Common myeloid progenitor, CD34-positive (primary cell): ENCODE measurements at regions of chr1 and their contacts with region 1.

Region 1: DNA sequence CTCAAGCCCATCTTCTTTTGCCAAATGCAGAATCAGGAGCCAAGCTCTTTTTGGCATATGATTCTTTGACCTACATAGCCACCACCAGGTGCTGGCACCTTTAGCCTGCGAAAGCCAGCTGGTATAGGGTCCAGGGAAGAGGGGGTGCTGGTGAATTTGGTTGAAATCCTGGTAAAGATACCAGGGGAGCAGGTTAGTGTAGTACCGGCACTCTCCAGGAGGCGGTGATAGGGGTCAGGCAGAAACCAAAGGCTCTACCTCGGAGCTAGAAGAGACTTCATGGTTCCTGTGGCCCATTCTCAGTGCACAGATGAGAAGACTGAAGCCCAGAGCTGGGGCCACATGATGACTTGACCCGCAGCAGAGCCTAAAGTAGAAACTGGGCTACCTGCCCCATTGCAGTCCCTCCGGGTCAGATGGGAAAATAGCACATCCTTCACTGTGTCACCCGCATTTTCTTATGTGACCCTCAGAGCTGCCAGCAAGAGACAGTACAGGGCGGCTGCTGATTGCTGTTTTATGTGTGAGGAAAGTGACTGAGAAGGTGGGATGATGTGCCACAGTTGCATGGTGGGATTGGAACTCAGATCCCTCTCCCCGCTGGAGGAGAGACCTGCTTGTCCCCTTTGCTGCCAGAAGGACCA is 36.0 kb upstream of the IL19 start:
- DNase-seq: peak; percentile 36 to 69 (median 65)
- H3K4me3 ChIP-seq: no peak overlapping the region
- H3K27ac ChIP-seq: no peak overlapping the region
- H3K4me1 ChIP-seq: peaks cover 0 to 38% (median 36%) of the 10 kb centered on the region in 4 experiments
- H3K27me3 ChIP-seq: no peaks in the 10 kb centered on the region

Region 2: GRCh38 chr1:206419250-206419649 is 315.4 kb before region 1 on chr1:
- CTCF ChIA-PET with region 1: no interaction called
- POLR2A ChIA-PET with region 1: no interaction called
- DNase-seq: no peak
- H3K4me3 ChIP-seq: no peak overlapping the region
- H3K27ac ChIP-seq: no peak overlapping the region
- H3K4me1 ChIP-seq: no peaks in the 10 kb centered on the region
- H3K27me3 ChIP-seq: no peaks in the 10 kb centered on the region

Region 3: DNA sequence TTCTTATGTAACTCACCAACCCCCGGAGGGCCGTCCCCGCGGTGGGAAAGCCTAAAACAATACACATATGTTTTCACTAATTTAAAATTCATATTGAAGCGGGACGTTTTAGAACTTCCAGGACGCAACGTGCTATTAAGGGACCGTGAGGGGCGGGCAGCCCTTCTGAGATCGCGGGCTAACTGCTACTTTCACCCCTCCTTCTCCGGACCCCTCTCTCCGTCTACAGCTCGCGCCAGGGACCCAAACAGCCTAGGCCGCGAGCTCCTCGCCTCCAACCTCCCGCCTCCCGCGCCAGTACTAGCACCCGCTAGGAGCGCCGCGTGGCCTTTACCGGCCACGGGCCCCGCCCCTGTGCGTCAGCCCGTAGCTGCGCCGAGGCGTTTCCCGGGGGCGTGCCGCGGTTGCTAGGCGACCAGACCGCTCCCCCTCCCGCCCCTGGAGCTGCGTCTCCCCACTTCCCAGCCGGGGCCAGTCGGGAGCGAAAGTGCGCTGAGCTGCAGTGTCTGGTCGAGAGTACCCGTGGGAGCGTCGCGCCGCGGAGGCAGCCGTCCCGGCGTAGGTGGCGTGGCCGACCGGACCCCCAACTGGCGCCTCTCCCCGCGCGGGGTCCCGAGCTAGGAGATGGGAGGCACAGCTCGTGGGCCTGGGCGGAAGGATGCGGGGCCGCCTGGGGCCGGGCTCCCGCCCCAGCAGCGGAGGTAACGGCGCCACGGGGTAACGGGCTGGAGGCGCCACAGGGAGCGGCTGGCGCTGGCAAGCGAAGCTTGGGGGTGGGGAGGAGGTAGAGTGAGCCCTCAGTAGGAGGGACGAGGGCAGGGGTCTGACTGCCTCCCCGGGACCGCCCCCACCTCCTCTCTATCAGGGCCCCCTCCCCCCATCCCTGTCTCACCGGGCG is 99.3 kb before region 1 on chr1 and contains the start of gene DYRK3:
- CTCF ChIA-PET with region 1: interaction called, 17 read pairs
- POLR2A ChIA-PET with region 1: no interaction called
- DNase-seq: peak; percentile 91 to 93 (median 92)
- H3K4me3 ChIP-seq: peak within 1 kb of the TSS; percentile 76 to 98 (median 85)
- H3K27ac ChIP-seq: peak within 1 kb of the TSS; percentile 82 to 86
- H3K4me1 ChIP-seq: peaks cover 11 to 29% (median 22%) of the 10 kb centered on the region in 4 experiments
- H3K27me3 ChIP-seq: no peaks in the 10 kb centered on the region

Region 4: DNA sequence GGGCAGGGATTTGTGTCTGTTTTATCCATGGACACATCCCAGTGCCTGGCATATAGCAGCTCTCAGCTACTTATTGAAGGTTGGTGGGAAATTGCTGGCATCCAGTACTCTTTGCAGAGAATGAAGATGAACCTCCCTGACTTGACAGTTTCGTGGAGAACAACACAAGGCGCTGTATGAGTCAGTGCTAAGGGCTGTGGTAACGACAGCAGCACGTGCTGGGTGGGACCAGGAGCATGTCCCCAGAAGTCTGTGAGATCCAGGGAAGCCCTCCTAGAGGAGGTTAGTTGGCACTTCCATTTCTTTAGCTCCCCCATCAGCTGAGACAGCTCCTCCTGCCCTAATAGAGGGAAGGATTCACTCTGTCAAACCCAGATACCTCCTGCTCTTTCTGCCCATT is 10.1 kb after region 1 on chr1:
- CTCF ChIA-PET with region 1: interaction called, 12 read pairs
- POLR2A ChIA-PET with region 1: no interaction called
- DNase-seq: no peak
- H3K4me3 ChIP-seq: no peak overlapping the region
- H3K27ac ChIP-seq: no peak overlapping the region
- H3K4me1 ChIP-seq: peaks cover 0 to 9% (median under 1%) of the 10 kb centered on the region in 4 experiments
- H3K27me3 ChIP-seq: no peaks in the 10 kb centered on the region

Region 5: GRCh38 chr1:206761159-206761768 is 26.6 kb after region 1 on chr1:
- CTCF ChIA-PET with region 1: interaction called, 15 read pairs
- POLR2A ChIA-PET with region 1: no interaction called
- DNase-seq: no peak
- H3K4me3 ChIP-seq: no peak overlapping the region
- H3K27ac ChIP-seq: no peak overlapping the region
- H3K4me1 ChIP-seq: peaks cover 6 to 41% (median 17%) of the 10 kb centered on the region in 4 experiments
- H3K27me3 ChIP-seq: no peaks in the 10 kb centered on the region

Region 6: GRCh38 chr1:206797534-206798383 is 63.1 kb after region 1 on chr1:
- CTCF ChIA-PET with region 1: interaction called, 250 read pairs
- POLR2A ChIA-PET with region 1: no interaction called
- DNase-seq: peak; percentile 42 to 72 (median 60)
- H3K4me3 ChIP-seq: no peak overlapping the region
- H3K27ac ChIP-seq: no peak overlapping the region
- H3K4me1 ChIP-seq: peaks cover 0 to 13% (median under 1%) of the 10 kb centered on the region in 4 experiments
- H3K27me3 ChIP-seq: no peaks in the 10 kb centered on the region